Left ventricle myocardium inferior (tissue), 1 donor: ENCODE measurements at regions of chr2 and their contacts with region 1.

Region 1: DNA sequence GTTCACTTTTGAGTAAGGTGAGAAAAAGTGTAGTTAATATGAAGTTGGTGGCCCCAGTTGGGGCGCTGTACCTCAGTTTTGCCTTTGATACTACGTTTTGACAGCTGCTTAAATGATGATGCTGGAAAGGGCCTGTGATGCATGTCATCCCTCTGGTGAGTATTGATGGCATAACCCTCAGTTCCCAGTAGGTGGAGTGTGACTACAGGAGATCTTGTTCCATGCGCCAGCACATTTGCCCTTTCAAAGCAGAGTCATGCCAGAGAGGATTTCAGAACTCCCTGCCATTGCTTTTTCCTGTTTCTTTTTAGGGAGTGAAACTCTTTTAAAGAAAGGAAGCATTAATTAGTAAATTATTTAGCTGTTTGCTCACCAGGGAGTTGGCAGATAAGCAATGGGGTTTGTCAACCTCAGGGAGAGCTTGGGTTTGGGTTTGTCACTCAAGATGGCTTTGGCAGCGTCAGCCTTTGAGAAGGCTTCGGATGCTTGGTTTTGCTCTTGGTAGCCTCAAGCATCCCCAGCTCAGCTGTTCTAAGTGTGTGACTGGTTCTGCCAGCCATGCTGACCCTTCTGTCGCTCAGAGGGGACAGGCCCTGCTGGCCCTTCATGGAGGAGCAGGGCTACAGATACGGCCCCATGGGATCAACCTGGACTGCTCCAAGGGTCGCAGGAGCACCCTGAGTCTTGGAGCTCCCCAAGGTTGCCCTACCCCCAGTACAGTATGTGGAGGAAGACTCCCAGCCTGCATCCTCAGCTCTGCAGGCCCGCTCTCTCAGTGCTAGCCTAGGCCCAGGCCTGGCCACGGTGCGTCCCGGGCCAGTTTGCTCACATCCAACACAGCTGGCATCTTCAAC is 29.1 kb downstream of the ARMC9 start:
- DNase-seq: no peak
- H3K4me3 ChIP-seq: no peak overlapping the region
- H3K27ac ChIP-seq: peak overlapping the region; percentile 63
- H3K4me1 ChIP-seq: peaks cover 8% of the 10 kb centered on the region
- H3K27me3 ChIP-seq: no peaks in the 10 kb centered on the region
- CTCF ChIP-seq: peak; percentile 88

Region 2: DNA sequence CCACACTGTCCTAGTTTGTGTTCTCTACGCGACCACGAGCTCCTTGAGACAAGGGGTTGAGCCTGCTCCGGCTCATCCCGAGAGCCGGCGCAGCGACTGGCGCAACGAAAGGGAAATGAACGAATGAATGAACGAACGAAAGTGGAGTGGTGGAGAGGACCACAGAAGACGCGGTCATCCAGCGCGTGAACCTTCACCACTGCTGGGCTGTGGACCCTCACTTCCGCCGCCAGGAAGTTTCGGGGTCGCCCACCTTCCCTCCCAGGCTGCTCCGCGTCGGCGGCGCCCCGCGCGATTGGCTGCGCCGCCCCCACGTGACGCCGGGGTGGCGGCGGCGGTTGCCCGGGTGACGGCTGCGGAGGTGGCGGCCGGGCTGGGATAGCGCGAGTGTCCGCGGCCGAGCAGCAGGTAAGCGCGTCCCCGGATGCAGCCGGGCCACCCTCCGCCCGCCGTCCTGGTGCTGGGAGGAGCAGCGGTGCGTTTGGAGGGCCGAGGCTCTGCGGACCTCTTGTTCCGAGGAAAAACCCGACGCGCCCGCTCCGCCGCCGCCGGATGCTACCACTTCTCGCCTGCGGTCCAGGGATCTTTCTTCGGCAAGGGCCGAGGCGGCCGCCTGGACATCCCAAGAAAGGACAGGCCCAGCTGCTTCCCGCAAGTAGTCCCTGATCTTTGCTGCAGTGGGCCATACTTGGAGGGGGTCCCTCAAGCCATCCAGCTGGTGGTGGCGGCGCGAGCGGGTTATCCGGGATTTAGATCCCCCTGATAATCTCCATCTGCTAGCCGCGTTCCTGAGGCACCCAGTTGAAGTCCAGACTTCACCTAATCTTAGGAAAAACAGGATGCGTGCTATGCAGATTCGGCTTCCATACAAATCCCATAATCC is 29.0 kb before region 1 on chr2 and contains the start of gene ARMC9:
- intact Hi-C with region 1: no loop called
- DNase-seq: peak; percentile 76
- H3K4me3 ChIP-seq: peak within 1 kb of the TSS; percentile 83
- H3K27ac ChIP-seq: peak within 1 kb of the TSS; percentile 63
- H3K4me1 ChIP-seq: peaks cover 22% of the 10 kb centered on the region
- H3K27me3 ChIP-seq: no peaks in the 10 kb centered on the region
- CTCF ChIP-seq: no peak
- total RNA-seq, gene ARMC9: 3.1 TPM

Region 3: DNA sequence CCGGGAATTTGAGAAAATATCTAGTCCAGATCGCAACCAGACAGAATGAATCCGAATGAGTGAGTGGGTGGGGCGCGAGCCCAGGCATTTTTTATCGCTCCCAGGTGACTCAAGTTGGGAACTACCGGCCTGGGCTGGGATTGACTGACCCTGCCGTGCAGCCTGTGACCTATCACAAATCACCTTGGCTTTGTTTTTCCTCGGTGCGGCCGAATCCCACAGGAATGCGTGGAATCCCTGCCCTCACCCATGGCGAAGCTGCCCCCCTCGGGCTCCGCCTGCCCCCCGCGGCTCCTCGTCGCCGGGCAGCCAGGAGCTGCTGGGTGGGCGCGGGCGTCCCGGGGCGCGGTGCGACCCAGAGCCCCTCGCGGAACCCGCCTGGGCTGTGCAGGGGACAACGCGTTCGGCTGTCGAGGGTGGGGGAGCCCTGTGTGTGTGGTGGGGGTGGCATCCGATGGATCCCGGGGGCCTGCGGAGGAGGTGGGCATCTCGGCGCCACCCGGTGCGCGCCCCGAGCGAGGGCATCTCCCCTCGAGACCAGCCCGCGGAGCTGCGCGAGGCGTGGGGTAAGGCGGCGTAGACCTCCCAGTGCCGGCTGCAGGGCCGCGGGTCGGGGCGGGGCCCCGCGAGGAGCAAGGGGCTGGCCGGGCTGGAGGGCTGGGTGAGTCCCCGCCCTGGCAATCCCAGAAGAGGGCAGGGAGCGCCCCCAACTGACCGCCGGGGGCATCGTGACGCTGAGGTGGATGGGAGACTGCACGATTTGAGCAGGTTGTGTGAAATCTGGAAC is 184.5 kb after region 1 on chr2:
- intact Hi-C with region 1: loop called (anchors 10 kb)
- DNase-seq: peak; percentile 84
- H3K4me3 ChIP-seq: peak overlapping the region; percentile 74
- H3K27ac ChIP-seq: no peak overlapping the region
- H3K4me1 ChIP-seq: peaks cover 14% of the 10 kb centered on the region
- H3K27me3 ChIP-seq: peaks cover 13% of the 10 kb centered on the region
- CTCF ChIP-seq: peak; percentile 90